GM18951 (cell line): ENCODE measurements at regions of chr11 and their contacts with region 1.

Region 1: GRCh38 chr11:2428322-2428795 is 16.0 kb downstream of the TRPM5 start:
- POLR2A ChIP-seq: no peak

Region 2: DNA sequence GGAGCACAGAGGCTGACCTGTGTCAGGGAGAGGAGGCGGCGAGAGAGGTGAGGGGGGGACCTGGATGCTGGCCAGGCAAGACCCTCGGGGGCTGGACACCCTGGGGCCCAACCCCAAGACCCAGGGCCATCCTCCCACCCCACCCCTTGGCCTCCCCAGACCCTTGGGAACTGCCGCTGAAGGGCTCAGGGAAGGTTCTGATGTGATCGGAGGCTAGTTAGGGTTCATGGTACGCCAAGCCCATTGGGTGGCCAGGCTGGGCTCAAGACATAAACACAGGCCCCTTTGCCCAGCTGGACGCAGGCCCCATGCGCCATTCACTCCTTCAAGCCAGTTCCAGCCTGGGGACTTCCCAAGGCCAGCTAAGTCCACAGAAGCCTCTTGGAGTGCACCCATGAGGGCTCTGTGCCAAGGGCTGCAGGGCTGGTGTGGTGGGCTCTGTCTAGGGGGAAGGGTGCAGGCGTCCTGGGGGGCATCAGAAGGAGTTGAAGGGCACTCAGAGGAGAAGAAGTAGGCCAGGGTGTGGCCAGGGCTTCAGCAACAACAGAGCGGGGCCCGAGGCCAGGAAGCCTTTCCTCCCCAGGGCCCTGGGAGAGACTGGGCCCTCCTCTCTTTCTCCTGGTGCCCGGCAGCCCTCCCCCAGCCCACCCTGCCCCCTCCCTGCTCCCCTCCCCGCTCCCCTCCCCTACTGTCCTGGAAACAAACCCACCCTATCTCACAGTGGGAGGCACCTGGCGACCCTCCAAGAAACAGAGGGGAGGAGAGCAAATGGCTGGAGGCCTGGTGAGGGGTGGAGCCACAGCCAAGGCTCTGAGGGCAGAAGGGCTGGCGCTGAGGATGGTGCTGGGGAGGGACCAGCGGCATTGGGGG is 113.6 kb before region 1 on chr11:
- in situ Hi-C with region 1: loop called (anchors 5 kb)
- POLR2A ChIP-seq: no peak

Region 3: DNA sequence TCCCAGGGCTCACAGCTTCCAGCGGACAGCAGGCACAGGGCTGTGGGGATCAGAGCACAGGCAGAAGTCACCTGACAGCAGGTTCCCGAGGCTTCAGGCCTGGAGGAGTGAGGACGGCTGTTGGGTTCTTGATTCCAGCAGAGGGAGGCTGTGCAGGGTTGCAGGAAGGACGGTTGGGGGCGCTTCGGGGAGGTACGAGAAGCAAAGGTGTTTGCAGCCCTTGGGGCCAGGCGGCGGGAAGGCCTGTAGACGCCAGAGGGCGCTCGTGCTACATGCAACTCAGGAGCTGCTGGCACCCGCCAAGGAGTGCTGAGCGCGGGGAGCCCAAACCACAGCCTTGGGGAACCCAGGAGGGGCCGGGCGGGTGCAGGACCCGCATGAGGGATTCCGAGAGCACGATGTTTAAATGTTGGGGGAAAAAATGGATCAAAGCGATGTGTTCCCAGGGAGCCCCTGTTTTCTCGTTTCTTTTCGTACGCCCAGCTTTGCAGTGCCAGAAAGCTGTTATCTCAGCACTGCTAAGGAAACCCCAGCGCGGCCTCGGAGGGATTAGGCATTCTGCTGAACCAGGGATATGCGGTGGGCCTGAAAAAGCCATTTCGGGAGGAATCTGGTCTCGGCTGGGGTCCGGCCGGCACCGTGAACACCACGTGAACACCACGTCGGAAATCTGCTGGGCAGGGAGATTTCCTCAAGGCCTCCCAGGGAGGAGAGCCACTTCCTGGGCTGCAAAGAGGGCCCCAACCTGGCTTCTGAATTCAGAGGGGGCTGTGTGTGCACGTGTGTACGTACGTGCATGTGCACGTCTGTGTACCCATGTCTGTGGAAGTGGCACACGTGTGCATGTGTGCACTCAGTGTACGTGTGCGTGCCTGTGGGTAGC is 104.6 kb after region 1 on chr11:
- in situ Hi-C with region 1: loop called (anchors 10 kb)
- POLR2A ChIP-seq: no peak

Region 4: GRCh38 chr11:2885676-2886081 is 457.3 kb after region 1 on chr11 and contains the start of gene CDKN1C:
- in situ Hi-C with region 1: loop called (anchors 25 kb)
- POLR2A ChIP-seq: peak; percentile 30